ENCODE measurements at regions of chr15 and their contacts with region 1.

Region 1: GRCh38 chr15:44788748-44789147 is 52.4 kb downstream of the TRIM69 start:
- DNase-seq: peak; percentile 72
- H3K4me3 Mint-ChIP-seq: peak overlapping the region; percentile 37
- H3K27ac Mint-ChIP-seq: peak overlapping the region; percentile 79
- H3K4me1 Mint-ChIP-seq: peaks cover 32% of the 10 kb centered on the region
- H3K27me3 Mint-ChIP-seq: no peaks in the 10 kb centered on the region

Region 2: DNA sequence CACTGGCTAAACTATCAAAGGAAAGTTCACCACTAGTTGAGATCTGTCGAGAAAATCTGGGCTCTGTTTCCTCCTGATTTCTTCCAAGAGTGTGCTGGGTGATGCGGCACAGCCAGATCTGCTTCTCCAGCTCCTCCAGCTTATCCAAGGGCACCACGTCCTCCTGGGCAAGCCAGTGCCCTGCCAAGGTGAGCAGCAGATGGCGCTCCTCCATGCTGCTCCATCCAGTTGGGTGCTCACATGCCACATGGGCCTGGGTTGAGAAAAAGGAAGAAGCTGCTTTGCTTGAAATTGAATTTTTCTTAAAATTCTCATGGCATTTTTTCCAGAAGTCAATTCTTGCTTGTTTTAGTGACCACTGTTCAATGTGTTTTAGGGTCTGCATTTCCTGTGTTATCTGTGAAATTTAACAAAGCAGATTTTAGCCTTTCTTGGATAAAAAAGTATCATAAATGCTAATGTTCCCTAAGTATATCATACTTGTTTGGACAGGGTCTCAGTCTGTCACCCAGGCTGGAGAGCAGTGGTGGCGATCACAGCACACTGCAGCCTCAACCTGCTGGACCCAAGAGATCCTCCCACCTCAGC is 204.5 kb before region 1 on chr15:
- CTCF ChIA-PET with region 1: interaction called, 10 read pairs
- POLR2A ChIA-PET with region 1: no interaction called
- intact Hi-C with region 1: no loop called
- DNase-seq: peak; percentile 76
- H3K4me3 Mint-ChIP-seq: no peak overlapping the region
- H3K27ac Mint-ChIP-seq: no peak overlapping the region
- H3K4me1 Mint-ChIP-seq: no peaks in the 10 kb centered on the region
- H3K27me3 Mint-ChIP-seq: no peaks in the 10 kb centered on the region

Region 3: DNA sequence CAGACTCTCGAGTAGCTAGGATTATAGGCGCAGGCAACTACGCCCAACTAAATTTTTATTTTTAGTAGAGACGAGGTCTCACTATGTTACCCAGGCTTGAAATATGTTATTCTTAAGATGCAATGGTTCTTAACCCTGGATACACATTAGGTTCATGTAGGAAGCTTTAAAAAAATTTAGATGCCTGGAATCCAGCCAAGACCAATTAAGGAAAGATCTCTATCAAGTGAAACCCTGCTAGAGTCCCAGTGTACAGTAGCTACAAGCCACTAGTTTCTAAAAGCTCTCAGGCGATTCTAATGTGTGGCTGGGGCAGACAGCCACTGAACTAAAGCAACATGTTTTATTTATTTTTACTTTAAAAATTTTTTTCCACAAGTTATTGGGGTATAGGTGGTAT is 19.2 kb before region 1 on chr15:
- CTCF ChIA-PET with region 1: no interaction called
- POLR2A ChIA-PET with region 1: no interaction called
- intact Hi-C with region 1: no loop called
- DNase-seq: no peak
- H3K4me3 Mint-ChIP-seq: no peak overlapping the region
- H3K27ac Mint-ChIP-seq: no peak overlapping the region
- H3K4me1 Mint-ChIP-seq: no peaks in the 10 kb centered on the region
- H3K27me3 Mint-ChIP-seq: no peaks in the 10 kb centered on the region